Vagina (tissue), 2 donors: ENCODE measurements at regions of chr9 and their contacts with region 1.

Region 1: GRCh38 chr9:5437254-5438216 is at the start of gene PLGRKT:
- DNase-seq: peak in 1 of 2 donors; percentile 94
- H3K4me3 ChIP-seq: peak within 1 kb of the TSS; percentile 62 to 79
- H3K27ac ChIP-seq: peak within 1 kb of the TSS; percentile 93
- H3K4me1 ChIP-seq: peaks cover 27% of the 10 kb centered on the region
- H3K27me3 ChIP-seq: no peaks in the 10 kb centered on the region
- CTCF ChIP-seq: peak in 1 of 3 experiments; percentile 27
- POLR2A ChIP-seq: peak; percentile 30 to 61
- total RNA-seq, gene PLGRKT: 10.1 TPM

Region 2: GRCh38 chr9:4750023-4750673 is 687.4 kb before region 1 on chr9:
- intact Hi-C with region 1: loop called (anchors 10 kb)
- DNase-seq: no peak
- H3K4me3 ChIP-seq: no peak overlapping the region
- H3K27ac ChIP-seq: no peak overlapping the region
- H3K4me1 ChIP-seq: no peaks in the 10 kb centered on the region
- H3K27me3 ChIP-seq: no peaks in the 10 kb centered on the region
- CTCF ChIP-seq: peak; percentile 12 to 62 (median 29)
- POLR2A ChIP-seq: no peak

Region 3: DNA sequence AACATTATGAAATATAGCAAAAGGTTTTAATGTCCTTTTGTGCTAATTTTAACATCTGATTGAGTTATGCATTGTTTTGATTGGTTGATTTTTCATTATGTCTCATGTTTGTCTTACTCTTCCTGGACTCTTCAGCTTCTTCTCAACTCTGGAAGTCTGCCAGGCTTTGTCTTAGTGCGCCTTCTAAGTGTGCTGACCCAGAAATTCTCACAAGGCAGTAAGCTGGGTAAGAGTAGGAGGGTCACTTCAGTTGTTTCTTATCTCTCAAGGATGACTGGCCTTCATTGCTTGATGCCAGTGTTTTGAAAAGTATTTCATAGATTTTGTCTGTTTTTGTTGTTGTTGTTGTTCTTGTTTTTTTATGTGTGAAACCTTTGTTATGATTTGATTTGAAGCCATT is 250.6 kb after region 1 on chr9:
- intact Hi-C with region 1: no loop called
- DNase-seq: no peak
- H3K4me3 ChIP-seq: no peak overlapping the region
- H3K27ac ChIP-seq: no peak overlapping the region
- H3K4me1 ChIP-seq: peaks cover 12% of the 10 kb centered on the region
- H3K27me3 ChIP-seq: no peaks in the 10 kb centered on the region
- CTCF ChIP-seq: no peak
- POLR2A ChIP-seq: no peak

Region 4: GRCh38 chr9:6944093-6944551 is 1506.6 kb after region 1 on chr9:
- intact Hi-C with region 1: loop called (anchors 10 kb)
- DNase-seq: no peak
- H3K4me3 ChIP-seq: no peak overlapping the region
- H3K27ac ChIP-seq: no peak overlapping the region
- H3K4me1 ChIP-seq: peaks cover 17% of the 10 kb centered on the region
- H3K27me3 ChIP-seq: no peaks in the 10 kb centered on the region
- CTCF ChIP-seq: no peak
- POLR2A ChIP-seq: no peak